ENCODE measurements at regions of chr1 and their contacts with region 1.

Region 1: GRCh38 chr1:227946624-227947385 is 927 bp downstream of the WNT9A start:
- DNase-seq: peak; percentile 85 to 93 (median 91)
- H3K4me3 ChIP-seq: peak overlapping the region; percentile 9 to 47 (median 20)
- H3K27ac ChIP-seq: no peak overlapping the region
- H3K4me1 ChIP-seq: peaks cover 0 to 6% (median 6%) of the 10 kb centered on the region in 3 donors
- H3K27me3 ChIP-seq: no peaks in the 10 kb centered on the region
- CTCF ChIP-seq: peak; percentile 80

Region 2: GRCh38 chr1:227762233-227762911 is 184.4 kb before region 1 on chr1:
- intact Hi-C with region 1: loop called (anchors 10 kb)
- DNase-seq: peak; percentile 87 to 95 (median 88)
- H3K4me3 ChIP-seq: no peak overlapping the region
- H3K27ac ChIP-seq: no peak overlapping the region
- H3K4me1 ChIP-seq: peaks cover 0 to 2% (median 0%) of the 10 kb centered on the region in 3 donors
- H3K27me3 ChIP-seq: no peaks in the 10 kb centered on the region
- CTCF ChIP-seq: peak; percentile 83

Region 3: DNA sequence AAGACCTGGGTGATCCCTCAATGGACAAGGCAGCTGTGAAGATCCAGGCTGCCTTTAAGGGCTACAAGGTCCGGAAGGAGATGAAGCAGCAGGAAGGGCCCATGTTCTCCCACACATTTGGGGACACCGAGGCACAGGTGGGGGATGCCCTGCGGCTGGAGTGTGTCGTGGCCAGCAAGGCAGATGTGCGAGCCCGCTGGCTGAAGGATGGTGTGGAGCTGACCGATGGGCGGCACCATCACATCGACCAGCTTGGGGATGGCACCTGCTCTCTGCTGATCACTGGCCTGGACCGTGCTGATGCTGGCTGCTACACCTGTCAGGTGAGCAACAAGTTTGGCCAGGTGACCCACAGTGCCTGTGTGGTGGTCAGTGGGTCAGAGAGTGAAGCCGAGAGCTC is 374.6 kb after region 1 on chr1:
- intact Hi-C with region 1: no loop called
- DNase-seq: no peak
- H3K4me3 ChIP-seq: no peak overlapping the region
- H3K27ac ChIP-seq: no peak overlapping the region
- H3K4me1 ChIP-seq: no peaks in the 10 kb centered on the region
- H3K27me3 ChIP-seq: no peaks in the 10 kb centered on the region
- CTCF ChIP-seq: no peak